PC-3 (cell line): ENCODE measurements at regions of chr18 and their contacts with region 1.

Region 1: DNA sequence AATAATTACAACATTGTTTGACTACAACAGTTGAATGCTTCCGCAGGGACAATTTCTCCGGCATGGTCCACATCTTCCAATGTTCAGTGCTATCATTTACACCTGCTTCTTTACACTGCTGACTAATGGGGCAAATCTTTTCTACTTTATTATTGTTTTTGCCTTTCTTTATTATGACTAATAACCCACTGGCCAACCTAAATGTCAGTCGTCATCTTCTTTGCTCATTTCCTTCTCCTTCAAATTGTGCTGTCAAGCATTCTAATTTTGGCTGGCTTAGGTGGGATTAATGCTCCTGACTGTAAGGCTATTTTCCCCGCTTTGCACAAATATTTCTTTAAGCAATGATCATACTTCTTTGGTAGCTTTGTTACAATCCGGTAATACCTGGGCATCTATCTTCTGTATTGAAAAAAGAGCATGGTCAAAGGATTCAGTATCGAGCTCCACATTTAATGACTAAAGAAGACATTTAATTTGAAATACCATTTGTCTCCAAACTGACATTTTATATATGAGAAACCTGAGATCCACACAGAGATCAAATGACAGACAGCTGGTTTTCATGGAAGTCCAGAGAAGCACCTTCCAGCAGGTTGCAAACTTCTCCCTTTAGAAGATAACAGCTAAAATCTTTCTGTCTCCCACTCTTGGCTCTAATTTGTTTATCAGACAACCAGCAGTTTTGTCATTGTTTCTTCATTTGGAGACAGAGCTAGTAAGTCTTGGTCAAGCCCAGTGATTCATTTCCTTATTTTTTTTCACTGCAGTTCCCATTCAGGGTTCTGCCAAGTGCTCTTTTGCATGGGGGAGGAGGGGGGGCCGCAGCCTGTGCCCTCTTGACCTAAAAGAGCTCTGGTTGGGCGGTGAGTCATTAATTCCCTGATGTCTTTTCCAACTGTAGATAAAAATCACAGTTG is 132.9 kb downstream of the SOCS6 start:
- DNase-seq: peak; percentile 90
- ATAC-seq: peak; percentile 74
- H3K4me3 ChIP-seq: peak overlapping the region; percentile 49; the same call in 1 of the 2 replicates
- H3K27ac ChIP-seq: peak overlapping the region; percentile 98
- H3K4me1 ChIP-seq: peaks cover 57% of the 10 kb centered on the region
- H3K27me3 ChIP-seq: no peaks in the 10 kb centered on the region
- CTCF ChIP-seq: no peak

Region 2: GRCh38 chr18:70243131-70243530 is 178.6 kb before region 1 on chr18:
- CTCF ChIA-PET with region 1: no interaction called
- POLR2A ChIA-PET with region 1: no interaction called
- intact Hi-C with region 1: loop called (anchors 2 kb)
- DNase-seq: peak; percentile 88
- ATAC-seq: peak; percentile 97
- H3K4me3 ChIP-seq: peak overlapping the region; percentile 59
- H3K27ac ChIP-seq: peak overlapping the region; percentile 95
- H3K4me1 ChIP-seq: peaks cover 16% of the 10 kb centered on the region
- H3K27me3 ChIP-seq: no peaks in the 10 kb centered on the region
- CTCF ChIP-seq: no peak

Region 3: GRCh38 chr18:70295192-70296188 is 126.2 kb before region 1 on chr18:
- CTCF ChIA-PET with region 1: no interaction called
- POLR2A ChIA-PET with region 1: no interaction called
- intact Hi-C with region 1: loop called (anchors 2 kb)
- DNase-seq: no peak
- ATAC-seq: no peak
- H3K4me3 ChIP-seq: no peak overlapping the region
- H3K27ac ChIP-seq: no peak overlapping the region
- H3K4me1 ChIP-seq: peaks cover 30% of the 10 kb centered on the region
- H3K27me3 ChIP-seq: no peaks in the 10 kb centered on the region
- CTCF ChIP-seq: no peak

Region 4: DNA sequence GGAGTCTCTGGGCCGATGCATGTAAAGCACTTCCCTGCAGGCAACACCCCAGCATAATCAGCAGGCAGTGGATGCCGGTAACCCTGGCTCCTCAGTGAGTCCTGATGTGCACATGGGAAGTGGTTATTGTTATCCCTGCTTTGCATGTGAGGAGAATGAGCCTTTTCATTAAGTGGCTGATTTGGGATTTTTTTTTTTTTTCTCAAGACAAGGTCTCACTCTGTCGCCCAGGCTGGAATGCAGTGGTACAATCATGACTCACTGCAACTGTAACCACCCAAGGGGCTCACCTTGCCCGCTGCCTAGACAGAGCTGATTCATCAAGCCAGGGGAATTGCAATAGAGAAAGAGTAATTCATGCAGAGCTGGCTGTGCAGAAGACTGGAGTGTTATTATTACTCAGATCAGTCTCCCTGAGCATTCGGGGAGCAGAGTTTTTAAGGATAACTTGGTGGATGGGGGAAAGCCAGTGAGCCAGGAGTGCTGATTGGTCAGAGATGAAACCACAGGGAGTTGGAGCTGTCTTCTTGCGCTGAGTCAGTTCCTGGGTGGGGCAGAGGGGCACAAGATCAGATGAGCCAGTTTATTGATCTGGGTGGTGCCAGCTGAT is 37.4 kb before region 1 on chr18:
- CTCF ChIA-PET with region 1: interaction called, 3 read pairs
- POLR2A ChIA-PET with region 1: interaction called, 8 read pairs
- intact Hi-C with region 1: loop called (anchors 1 kb)
- DNase-seq: peak; percentile 96
- ATAC-seq: peak; percentile 95
- H3K4me3 ChIP-seq: peak overlapping the region; percentile 47; the same call in 1 of the 2 replicates
- H3K27ac ChIP-seq: peak overlapping the region; percentile 97
- H3K4me1 ChIP-seq: peaks cover 24% of the 10 kb centered on the region
- H3K27me3 ChIP-seq: no peaks in the 10 kb centered on the region
- CTCF ChIP-seq: no peak